ENCODE measurements at regions of chr6 and their contacts with region 1.

Region 1: GRCh38 chr6:157323255-157323965 is at the start of gene TMEM242:
- DNase-seq: peak; percentile 73 to 94
- ATAC-seq: peak; percentile 97 to 98
- H3K4me3 ChIP-seq: peak within 1 kb of the TSS; percentile 57
- H3K27ac ChIP-seq: peak within 1 kb of the TSS; percentile 87 to 99
- H3K4me1 ChIP-seq: peaks cover 11% of the 10 kb centered on the region; the same call in 2 of the 3 replicates
- CTCF ChIP-seq: no peak
- EP300 ChIP-seq: no peak
- POLR2A ChIP-seq: peak; percentile 82
- RAD21 ChIP-seq: 0 out of 5 replicates have a peak, but pooled peaks of 1 of the 2 experiments have one; percentile 15
- polyA plus RNA-seq, gene TMEM242: 5.1 and 7.4 TPM in 2 replicates

Region 2: DNA sequence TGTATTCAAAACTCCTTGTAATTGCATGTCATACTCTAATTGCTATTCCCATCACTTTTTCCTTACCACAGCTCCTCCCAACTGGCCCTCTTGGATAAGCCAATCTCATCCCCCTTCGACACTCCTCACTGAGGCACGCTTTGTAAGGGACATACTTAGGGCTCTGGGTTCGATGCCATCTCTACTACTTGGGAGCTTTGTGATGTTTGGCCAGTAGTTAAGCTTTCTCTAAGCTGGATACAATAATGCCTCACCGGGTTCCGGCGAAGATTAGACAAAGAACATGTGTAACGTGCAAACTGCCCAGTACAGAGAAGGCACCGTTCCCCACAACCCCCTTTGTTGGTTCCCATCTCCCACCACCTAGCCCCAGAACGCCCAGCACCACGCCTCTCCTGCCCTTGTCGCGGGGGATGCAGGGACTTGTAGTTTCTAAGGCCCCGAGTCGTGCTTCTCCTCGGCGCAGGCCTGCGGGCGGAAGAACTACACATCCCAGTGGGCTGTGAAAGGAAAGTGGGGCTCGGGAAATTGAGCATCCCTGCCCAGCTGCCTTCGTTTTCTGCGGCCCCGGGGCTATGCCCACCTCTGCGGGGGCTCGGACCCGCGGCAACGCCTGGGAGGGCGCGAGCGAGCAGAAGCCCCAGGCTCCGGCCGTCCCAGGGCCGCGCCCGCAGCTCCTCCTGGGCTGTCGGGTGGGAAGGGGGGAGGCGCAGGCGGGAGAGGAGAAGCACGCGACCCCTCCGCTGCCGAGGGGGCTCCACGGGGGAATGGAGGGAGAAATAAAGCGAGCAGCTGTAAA is 56.4 kb after region 1 on chr6:
- CTCF ChIA-PET with region 1: interaction called, 3 read pairs
- POLR2A ChIA-PET with region 1: interaction called, 24 read pairs
- DNase-seq: peak; percentile 56 to 89
- ATAC-seq: peak; percentile 83 to 95
- H3K4me3 ChIP-seq: peak overlapping the region; percentile 95
- H3K27ac ChIP-seq: peak overlapping the region; percentile 93 to 98
- H3K4me1 ChIP-seq: 0 out of 3 replicates have a peak, but pooled peaks cover 4% of the 10 kb centered on the region
- CTCF ChIP-seq: no peak
- EP300 ChIP-seq: no peak
- POLR2A ChIP-seq: peak; percentile 35; the same call in 1 of the 2 replicates
- RAD21 ChIP-seq: no peak